ENCODE measurements at regions of chr14 and their contacts with region 1.

Region 1: DNA sequence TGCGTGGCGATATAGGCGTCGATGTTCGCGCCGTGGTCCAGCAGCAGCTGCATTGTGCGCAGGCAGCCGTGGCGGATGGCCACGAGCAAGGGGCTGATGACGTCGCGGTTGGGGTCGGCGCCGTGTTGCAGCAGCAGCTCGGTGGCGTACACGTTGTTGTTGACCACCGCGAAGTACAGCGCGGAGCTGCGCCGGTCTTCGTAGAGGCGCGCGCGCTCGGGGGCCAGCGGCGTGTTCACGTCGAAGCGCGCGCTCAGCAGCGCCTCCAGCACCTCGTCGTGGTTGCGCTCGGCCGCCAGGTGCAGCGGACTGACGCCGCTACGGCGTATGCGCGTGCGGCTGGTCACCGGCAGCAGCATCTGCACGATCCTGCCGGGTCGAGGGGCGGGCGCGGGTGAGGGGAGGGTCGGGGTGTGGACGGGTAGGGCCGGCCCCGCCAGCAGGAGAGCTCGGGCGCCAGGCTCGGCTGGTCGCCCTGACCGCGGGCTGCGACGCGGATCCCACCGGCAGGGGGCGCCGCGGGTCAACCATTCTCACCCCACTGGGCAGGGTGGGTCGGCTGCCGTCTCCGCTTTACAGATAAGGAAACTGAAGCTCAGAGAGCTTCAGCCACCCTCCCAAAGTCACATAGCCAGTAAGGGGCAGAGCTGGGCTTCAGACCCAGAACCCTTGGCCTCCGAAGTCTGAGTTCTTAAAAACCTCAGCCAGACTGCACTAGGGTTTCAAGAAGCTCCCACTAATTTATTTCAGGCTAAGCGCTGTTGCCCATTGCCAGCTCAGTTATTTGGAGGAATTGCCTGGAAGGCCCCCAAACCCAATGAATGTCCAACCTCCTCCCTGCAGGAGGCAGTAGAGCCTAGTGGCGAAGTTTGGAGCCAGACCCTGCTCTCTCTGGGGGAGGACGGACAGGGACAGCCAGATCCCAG is 12.4 kb downstream of the FAM181A start:
- H3K4me3 Mint-ChIP-seq: peak overlapping the region; percentile 68
- H3K27ac Mint-ChIP-seq: no peak overlapping the region
- H3K4me1 Mint-ChIP-seq: peaks cover 33% of the 10 kb centered on the region
- H3K27me3 Mint-ChIP-seq: peaks cover 19% of the 10 kb centered on the region

Region 2: DNA sequence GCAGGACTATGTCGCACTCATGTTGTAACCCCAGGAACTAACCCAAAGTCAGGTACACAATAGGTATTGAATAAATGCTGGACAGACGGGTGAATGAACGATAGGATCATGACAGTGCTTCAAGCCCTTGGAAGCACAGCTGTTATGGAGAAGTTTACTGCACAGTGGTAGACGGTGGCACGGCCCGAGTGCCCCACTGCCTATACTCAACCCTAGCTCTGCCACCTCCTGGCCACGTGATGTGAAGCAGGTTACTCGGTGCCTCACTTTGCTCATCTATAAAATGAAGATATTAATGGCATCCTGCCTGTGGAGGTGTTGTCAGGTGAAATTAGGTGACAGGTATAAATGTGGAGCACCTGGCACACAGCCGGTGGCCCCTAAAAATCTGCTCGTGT is 31.0 kb after region 1 on chr14:
- intact Hi-C with region 1: loop called (anchors 2 kb)
- H3K4me3 Mint-ChIP-seq: peak overlapping the region; percentile 71
- H3K27ac Mint-ChIP-seq: no peak overlapping the region
- H3K4me1 Mint-ChIP-seq: peaks cover 75% of the 10 kb centered on the region
- H3K27me3 Mint-ChIP-seq: peaks cover 33% of the 10 kb centered on the region

Region 3: GRCh38 chr14:94001501-94002396 is 62.2 kb after region 1 on chr14:
- intact Hi-C with region 1: loop called (anchors 1 kb)
- H3K4me3 Mint-ChIP-seq: no peak overlapping the region
- H3K27ac Mint-ChIP-seq: no peak overlapping the region
- H3K4me1 Mint-ChIP-seq: peaks cover 6% of the 10 kb centered on the region
- H3K27me3 Mint-ChIP-seq: peaks cover 39% of the 10 kb centered on the region

Region 4: DNA sequence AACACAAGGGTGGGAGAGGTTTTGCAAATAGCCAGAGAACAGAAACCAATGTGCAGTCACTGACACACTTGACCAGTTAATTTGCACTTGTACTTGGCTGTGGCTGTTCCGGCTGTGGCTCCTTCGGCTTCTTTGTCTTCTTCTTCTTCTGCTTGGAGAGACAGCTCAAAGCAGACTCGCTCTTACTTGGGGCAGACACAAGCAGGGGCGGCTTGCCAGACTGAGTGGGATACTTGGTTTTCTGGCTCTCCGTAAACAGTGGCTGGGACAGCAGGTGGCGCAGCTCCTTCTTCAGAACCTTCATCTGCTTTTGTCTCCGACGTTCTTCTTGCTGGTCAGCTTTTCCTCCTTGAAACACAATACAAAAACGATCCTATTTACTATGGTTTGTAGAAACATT is 111.5 kb after region 1 on chr14:
- intact Hi-C with region 1: no loop called
- H3K4me3 Mint-ChIP-seq: no peak overlapping the region
- H3K27ac Mint-ChIP-seq: no peak overlapping the region
- H3K4me1 Mint-ChIP-seq: no peaks in the 10 kb centered on the region
- H3K27me3 Mint-ChIP-seq: no peaks in the 10 kb centered on the region